Activated T-helper 1 cell treated with anti-CD3 and anti-CD28 coated beads, Interleukin-12 subunit alpha, Interleukin-12 subunit beta, Interleukin-2, Interleukin-4 antibody, amounts not matched to agents 30 ng/mL and 10 ng/mL and 1 ng/mL, durations not matched to agents 14 hours and 24 hours and 36 hours (primary cell): ENCODE measurements at regions of chr1 and their contacts with region 1.

Region 1: GRCh38 chr1:31065310-31066217 is at the start of gene PUM1:
- DNase-seq: peak; percentile 97
- H3K4me3 Mint-ChIP-seq: peak within 1 kb of the TSS; percentile 99
- H3K27ac Mint-ChIP-seq: peak within 1 kb of the TSS; percentile 98
- H3K4me1 Mint-ChIP-seq: peaks cover 35% of the 10 kb centered on the region
- H3K27me3 Mint-ChIP-seq: no peaks in the 10 kb centered on the region
- total RNA-seq, gene PUM1: 130 and 132 TPM in 2 replicates

Region 2: GRCh38 chr1:31010086-31010989 is 55.2 kb before region 1 on chr1:
- intact Hi-C with region 1: loop called (anchors 1 kb)
- DNase-seq: peak; percentile 9
- H3K4me3 Mint-ChIP-seq: no peak overlapping the region
- H3K27ac Mint-ChIP-seq: peak overlapping the region; percentile 86
- H3K4me1 Mint-ChIP-seq: peaks cover 58% of the 10 kb centered on the region
- H3K27me3 Mint-ChIP-seq: no peaks in the 10 kb centered on the region